A673 (cell line): ENCODE measurements at regions of chr14 and their contacts with region 1.

Region 1: DNA sequence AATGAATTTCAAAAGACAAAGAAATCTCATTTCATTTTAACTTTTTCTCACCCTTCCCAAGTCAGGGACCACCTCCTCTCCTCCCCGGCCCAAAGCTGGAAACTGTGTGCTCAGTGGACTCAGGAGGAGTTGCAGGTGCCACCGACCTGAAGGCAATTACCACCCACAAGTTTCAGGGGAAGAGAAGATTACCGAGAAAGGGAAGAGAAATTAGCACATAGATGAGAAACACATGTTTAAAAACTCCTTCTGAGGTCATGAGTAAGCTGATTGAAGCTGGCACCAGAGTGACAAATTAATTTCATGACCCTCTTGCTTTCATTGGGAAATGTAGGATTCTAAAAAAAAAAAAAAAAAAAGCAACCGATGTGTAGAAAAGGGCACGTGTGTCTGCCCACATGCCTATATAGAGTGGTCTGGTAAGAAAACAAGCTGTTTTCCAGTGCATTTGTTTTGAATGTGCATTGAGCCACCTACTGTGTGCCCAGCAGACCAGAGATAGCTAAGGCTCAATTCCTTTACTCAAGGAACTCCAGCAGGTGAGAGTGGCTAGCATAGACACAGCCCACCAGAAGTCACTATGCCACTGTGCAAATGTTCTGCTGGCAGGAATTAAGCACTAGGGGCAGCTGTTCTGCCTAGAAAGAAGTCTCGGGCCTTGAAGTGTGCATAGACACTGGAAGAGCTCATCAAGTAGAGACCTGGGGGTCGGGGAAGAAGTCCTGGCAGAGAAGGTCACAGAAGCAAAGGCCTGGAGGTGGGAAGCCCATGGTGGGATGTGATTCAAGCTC is 30.5 kb downstream of the DPF3 start:
- DNase-seq: peak; percentile 33
- H3K4me3 ChIP-seq: no peak overlapping the region
- H3K27ac ChIP-seq: no peak overlapping the region
- H3K4me1 ChIP-seq: no peaks in the 10 kb centered on the region
- H3K27me3 ChIP-seq: no peaks in the 10 kb centered on the region
- CTCF ChIP-seq: no peak

Region 2: DNA sequence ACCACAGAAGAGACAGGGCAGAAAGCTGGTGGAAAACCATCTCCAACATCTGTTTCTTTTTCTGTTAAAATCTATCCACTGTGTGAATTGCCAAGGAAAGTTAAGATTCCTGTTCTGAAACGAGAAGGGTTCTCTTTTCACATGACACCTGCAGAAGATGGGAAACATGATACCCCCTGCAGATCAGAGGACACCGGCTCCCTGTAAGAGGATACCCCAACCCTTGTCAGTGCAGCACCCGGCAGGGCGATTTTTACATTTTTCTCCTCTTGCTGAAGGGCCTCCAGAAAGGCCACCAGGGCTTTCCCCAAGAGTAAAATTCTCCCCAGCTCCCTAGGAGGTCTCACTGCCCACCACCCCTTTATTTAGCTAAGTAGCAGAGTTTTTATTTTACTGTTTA is 17.7 kb before region 1 on chr14:
- CTCF ChIA-PET with region 1: no interaction called
- POLR2A ChIA-PET with region 1: interaction called, 16 read pairs
- intact Hi-C with region 1: no loop called
- DNase-seq: no peak
- H3K4me3 ChIP-seq: no peak overlapping the region
- H3K27ac ChIP-seq: no peak overlapping the region
- H3K4me1 ChIP-seq: no peaks in the 10 kb centered on the region
- H3K27me3 ChIP-seq: no peaks in the 10 kb centered on the region
- CTCF ChIP-seq: no peak

Region 3: GRCh38 chr14:72887514-72887913 is 24.1 kb after region 1 on chr14:
- CTCF ChIA-PET with region 1: no interaction called
- POLR2A ChIA-PET with region 1: no interaction called
- intact Hi-C with region 1: no loop called
- DNase-seq: no peak
- H3K4me3 ChIP-seq: no peak overlapping the region
- H3K27ac ChIP-seq: no peak overlapping the region
- H3K4me1 ChIP-seq: peaks cover 36% of the 10 kb centered on the region
- H3K27me3 ChIP-seq: no peaks in the 10 kb centered on the region
- CTCF ChIP-seq: no peak

Region 4: GRCh38 chr14:72926292-72927028 is 63.0 kb after region 1 on chr14 and contains the start of gene DCAF4:
- CTCF ChIA-PET with region 1: no interaction called
- POLR2A ChIA-PET with region 1: interaction called, 15 read pairs
- intact Hi-C with region 1: no loop called
- DNase-seq: peak; percentile 99
- H3K4me3 ChIP-seq: peak within 1 kb of the TSS; percentile 84
- H3K27ac ChIP-seq: peak within 1 kb of the TSS; percentile 70
- H3K4me1 ChIP-seq: no peaks in the 10 kb centered on the region
- H3K27me3 ChIP-seq: no peaks in the 10 kb centered on the region
- CTCF ChIP-seq: no peak
- total RNA-seq, gene DCAF4: 23.4 and 25.1 TPM in 2 replicates